Cardiac septum (tissue), 1 donor: ENCODE measurements at regions of chr1 and their contacts with region 1.

Region 1: DNA sequence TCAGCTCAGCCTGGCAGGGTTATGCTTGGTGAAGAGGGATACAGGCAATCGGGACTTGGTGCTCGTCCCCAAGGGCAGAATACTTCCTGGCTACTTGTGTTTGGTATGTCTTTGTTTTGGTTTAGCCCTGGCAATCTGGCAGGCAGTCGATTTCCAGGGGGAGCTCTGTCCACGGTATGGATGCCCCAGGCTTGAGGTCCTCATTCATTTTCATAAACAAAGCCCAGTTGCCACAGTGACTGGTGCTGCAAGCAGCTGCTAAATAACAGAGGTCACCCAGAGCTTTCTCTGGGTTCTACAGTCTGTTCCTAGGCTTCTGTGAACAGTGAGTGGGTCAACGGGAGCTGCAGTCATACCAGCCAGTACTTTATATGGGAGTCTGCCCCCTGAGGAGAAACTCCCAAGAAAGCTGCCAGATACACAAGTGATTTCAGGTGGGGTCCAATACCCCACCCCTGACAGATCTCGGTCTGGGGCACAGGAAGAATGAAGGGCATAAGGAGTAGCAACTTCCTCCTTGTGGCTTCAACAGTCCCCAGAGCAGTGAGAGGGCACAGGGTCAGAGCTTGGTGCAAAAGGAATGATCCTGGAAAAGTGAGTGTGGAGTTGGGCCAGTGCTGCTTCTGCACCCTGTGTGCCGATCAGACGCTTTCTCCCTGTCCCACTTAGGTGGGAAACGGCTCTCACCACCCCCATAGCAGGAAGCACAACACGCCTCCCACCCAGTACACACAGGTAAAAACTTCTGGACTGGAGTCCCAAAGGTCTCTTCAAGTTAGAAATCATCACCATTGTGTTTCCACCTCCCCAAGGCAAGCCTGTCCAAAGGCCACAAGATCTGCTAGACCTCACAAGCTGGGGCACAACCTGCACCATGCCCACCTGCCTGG is 55.5 kb downstream of the TGFBR3 start:
- DNase-seq: peak; percentile 82

Region 2: DNA sequence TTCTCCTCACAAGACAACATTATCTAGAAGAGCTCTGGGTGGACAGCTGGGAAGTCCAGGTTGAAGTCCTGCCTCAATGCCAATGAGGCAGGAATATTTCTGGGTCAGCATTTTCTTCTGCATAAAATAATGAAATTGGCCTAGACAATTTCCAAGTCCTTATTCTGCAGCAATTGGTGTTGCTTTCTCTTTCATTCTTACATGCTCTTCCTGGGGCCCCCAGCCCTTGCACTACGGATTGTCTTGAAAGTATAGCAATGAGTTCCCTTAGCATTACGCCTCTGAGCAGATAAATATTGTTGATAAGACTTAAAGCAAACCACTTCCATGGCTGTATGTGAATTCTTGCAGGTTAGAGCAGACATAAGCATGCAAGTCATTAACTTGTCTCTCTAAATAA is 133.1 kb before region 1 on chr1:
- intact Hi-C with region 1: loop called (anchors 5 kb)
- DNase-seq: no peak

Region 3: GRCh38 chr1:91757763-91758460 is 72.6 kb before region 1 on chr1:
- intact Hi-C with region 1: no loop called
- DNase-seq: no peak

Region 4: DNA sequence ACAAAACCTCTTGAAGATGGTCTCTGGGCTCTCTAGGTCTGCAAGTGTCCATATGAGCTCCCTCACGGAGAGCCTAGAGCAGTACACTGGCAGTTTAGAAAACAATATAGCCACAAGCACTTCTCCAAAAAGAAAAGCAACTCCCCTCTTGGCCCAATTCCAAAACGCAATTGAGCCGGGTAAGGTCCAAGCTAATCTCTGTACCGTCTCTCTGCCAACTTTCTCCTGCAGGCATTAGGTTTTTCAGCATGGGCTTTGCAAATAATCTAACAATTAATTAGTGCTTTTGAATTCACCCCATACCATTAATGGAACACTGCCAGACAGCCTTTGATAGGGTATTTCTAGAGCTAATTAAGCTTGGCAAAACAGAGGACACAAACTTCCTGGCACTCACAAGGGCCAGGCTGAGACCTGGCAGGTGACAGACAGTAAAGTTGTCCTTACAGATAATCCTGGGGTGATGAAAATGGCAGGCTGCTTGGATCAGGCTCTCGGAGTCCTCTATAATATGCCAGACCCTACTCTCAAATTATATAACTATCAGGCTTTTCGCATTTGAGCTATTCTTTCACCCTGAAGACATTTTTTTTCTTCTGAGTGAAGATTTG is 15.6 kb after region 1 on chr1:
- intact Hi-C with region 1: loop called (anchors 2 kb)
- DNase-seq: no peak

Region 5: GRCh38 chr1:91929250-91929649 is 98.8 kb after region 1 on chr1:
- intact Hi-C with region 1: loop called (anchors 5 kb)
- DNase-seq: no peak